AG04449 (cell line): ENCODE measurements at regions of chr4 and their contacts with region 1.

Region 1: GRCh38 chr4:86918539-86919072 is 16.2 kb upstream of the AFF1 start:
- DNase-seq: peak; percentile 73
- H3K4me3 ChIP-seq: no peak overlapping the region
- CTCF ChIP-seq: no peak

Region 2: DNA sequence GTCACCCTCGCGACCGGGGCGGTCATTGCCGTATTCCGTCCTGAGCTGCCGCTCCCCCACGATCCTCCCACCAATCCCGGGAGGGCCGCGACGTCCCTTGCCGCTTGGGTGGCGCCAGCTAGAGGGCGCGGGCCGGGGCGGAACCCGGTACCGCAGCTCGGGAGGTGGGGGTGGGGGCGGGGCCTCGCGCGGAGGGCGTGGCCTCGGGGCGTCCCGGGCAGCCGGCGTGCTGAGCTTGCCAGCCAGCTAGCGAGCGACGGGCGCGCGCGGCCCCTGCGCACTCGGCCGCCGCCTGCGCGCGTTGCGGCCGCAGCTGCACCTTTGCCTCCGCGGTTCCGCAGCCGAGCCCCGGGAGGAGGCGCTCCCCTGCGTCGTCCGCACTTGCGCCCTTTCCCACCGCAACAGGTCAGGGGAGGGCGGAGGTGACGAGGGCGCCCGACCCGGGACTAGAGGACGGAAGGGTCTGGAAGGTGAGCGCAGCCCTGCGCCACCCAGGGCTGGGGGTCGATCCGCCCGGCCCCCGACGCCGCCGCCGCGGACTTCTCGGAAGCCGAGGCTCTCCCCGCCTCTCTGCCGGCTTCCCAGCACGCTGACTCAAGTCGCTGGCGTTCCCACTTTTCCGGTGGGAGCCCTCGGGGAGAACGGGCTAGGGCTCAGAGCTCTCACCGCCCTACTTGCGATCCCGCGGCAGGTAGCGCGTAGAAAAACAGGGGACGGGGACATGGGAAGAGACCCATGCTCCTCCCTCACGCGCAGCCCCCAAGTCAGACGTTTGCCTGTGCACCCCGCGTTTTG is 16.4 kb after region 1 on chr4 and contains the start of gene AFF1:
- CTCF ChIA-PET with region 1: interaction called, 52 read pairs
- POLR2A ChIA-PET with region 1: interaction called, 4 read pairs
- DNase-seq: no peak
- H3K4me3 ChIP-seq: peak within 1 kb of the TSS; percentile 83
- CTCF ChIP-seq: peak; percentile 59

Region 3: GRCh38 chr4:87058356-87059073 is 139.9 kb after region 1 on chr4:
- CTCF ChIA-PET with region 1: interaction called, 18 read pairs
- POLR2A ChIA-PET with region 1: no interaction called
- DNase-seq: no peak
- H3K4me3 ChIP-seq: no peak overlapping the region
- CTCF ChIP-seq: no peak

Region 4: GRCh38 chr4:87118826-87119225 is 200.2 kb after region 1 on chr4:
- CTCF ChIA-PET with region 1: interaction called, 24 read pairs
- POLR2A ChIA-PET with region 1: no interaction called
- DNase-seq: no peak
- H3K4me3 ChIP-seq: no peak overlapping the region
- CTCF ChIP-seq: no peak

Region 5: DNA sequence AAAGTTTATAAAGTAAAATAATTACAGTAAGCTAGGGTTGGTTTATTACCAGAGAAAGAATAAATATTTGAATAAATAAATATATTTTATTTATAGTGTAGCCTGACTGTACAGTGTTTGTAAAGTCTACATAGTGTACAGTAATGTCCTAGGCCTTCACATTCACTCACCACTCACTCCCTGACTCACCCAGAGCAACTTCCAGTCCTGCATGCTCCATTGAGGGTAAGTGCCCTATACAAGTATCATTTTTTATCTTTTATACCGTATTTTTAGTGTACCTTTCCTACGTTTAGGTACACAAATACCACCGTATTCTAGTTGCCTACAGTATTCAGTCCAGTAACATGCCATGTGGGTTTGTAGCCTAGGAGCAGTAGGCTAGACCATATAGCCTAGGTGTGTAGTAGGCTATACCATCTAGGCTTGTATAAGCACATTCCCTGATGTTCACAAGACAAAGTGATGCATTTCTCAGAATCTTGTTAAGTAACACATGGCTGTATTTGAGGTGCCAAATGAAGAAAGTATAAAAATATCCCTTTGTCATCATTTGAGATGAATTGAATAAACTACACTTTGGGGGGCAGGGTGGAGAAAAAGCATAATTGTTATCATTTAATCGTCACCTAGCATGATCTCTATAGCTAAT is 316.5 kb after region 1 on chr4:
- CTCF ChIA-PET with region 1: interaction called, 11 read pairs
- POLR2A ChIA-PET with region 1: no interaction called
- DNase-seq: no peak
- H3K4me3 ChIP-seq: peak overlapping the region; percentile 58
- CTCF ChIP-seq: no peak